ENCODE measurements at regions of chr5 and their contacts with region 1.

Region 1: DNA sequence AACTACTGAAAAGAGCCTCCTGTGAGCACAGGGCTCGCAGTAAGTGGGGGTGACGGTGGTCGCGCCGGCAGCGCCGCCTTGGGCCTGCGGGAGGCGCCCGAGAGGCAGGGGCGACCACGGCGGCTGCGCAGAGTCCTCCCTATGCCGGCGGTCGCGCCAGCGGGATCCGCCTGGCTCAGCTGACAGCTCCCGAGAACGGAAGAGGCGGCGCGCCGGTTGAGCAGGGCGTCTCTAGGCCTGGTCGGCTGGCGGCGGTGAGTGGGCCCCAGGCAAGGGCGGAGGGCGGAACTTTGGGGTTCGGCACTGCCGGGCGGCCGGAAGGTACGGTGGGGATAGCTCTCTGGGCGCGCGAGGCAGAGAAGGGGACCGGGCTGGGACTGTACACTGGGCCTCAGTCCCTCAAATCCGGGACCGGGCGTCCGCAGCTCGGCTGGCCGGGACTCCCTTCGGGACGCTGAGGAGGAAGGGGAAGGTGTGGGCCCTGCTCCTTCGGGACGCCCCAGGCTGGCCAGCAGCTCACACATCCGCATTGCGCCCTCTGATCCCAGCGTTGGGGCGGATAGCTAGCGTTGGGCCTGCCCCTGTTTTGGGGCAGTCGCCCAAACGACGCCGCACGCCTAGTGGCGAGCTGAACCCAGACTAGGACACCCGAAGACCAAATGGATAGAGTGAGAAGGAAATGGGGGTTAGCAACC is at the start of gene RNF14:
- DNase-seq: peak; percentile 90
- H3K4me3 ChIP-seq: peak within 1 kb of the TSS; percentile 67 to 83
- H3K27ac ChIP-seq: peak within 1 kb of the TSS; percentile 96
- H3K4me1 ChIP-seq: no peaks in the 10 kb centered on the region
- H3K27me3 ChIP-seq: no peaks in the 10 kb centered on the region
- CTCF ChIP-seq: peak; percentile 81 to 98 (median 94)
- POLR2A ChIP-seq: peak; percentile 87
- total RNA-seq, gene RNF14: 40.8 to 66.9 TPM

Region 2: DNA sequence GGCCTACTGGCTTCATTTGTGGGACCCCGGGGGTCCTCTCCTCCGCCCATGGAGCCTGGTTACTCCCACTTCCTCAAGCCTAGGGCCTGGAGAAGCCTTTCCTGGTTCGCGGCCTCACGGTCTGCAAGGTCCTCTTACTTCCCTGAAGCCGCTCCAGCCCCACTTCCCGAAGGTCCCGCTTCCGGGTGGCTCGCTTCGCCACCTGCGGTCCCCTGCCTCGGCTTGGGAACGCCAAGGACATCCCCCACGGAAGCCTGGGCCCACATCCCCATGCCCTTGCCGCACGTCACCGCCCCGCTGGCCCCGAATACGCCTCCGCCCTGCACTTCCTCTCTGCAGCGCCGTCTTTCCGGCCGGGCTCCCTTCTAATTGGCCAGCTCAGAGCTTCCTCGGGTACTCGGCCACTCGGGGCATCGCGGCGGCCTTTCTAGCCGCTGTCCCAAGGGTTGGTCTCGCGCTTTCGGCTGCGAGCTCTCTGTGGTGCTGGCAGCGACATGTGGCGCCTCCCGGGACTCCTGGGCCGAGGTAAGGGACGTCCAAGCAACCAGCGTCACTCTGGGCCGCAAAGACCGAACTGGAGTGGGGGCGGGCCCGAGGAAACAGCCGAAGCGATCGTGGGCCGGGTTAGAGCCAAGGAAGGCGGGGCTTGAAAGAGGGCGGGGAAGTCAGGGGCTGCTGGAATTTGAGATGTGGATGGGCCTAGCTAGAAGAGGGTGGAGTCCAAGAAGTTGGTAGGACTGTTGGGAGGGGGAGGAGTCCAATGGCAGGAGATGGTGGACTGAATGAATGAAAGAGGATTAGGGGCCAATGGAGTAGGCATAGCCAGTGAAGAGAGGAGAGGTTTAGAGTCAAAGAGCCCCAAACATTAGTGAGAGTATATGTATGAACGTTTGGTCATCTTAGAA is 45.4 kb before region 1 on chr5 and contains the start of gene DELE1:
- intact Hi-C with region 1: loop called (anchors 2 kb)
- DNase-seq: peak; percentile 90
- H3K4me3 ChIP-seq: peak within 1 kb of the TSS; percentile 59 to 62
- H3K27ac ChIP-seq: peak within 1 kb of the TSS; percentile 94 to 99
- H3K4me1 ChIP-seq: no peaks in the 10 kb centered on the region
- H3K27me3 ChIP-seq: no peaks in the 10 kb centered on the region
- CTCF ChIP-seq: peak in 2 of 4 experiments; percentile 13 to 22
- POLR2A ChIP-seq: peak; percentile 68
- total RNA-seq, gene DELE1: 66.7 to 98.1 TPM

Region 3: DNA sequence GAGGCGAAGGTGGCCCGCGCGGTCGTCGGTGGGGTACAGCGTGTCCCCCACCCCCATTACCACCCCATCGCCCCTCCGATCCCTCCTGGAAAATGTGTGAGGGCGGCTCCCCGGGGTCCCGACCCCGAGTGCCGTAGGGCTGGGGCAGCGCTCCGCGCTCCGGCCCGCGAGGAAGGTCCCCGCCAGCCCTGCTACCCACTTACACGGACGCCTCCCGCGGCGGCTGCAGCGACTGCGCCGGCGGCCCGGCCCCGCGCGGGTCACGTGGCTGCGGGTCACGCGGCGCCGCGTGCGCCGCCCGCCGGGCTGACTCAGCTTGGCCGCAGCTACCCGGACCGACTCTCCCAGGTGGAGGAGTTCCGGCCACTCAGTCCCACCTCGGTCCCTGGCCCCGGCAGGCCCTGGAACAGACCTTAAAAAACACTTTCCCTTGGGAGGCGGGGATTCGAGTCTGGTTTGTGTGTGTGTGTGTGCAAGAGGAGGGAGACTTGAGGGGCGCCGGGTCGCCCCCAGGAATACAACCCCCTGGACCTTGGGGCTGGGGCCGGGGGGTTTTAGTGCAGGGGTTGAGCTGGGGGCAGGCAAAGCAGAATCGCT is 43.8 kb after region 1 on chr5 and contains the start of gene GNPDA1:
- intact Hi-C with region 1: loop called (anchors 10 kb)
- DNase-seq: peak; percentile 78
- H3K4me3 ChIP-seq: peak within 1 kb of the TSS; percentile 73 to 81
- H3K27ac ChIP-seq: peak within 1 kb of the TSS; percentile 87
- H3K4me1 ChIP-seq: peaks cover 8% of the 10 kb centered on the region
- H3K27me3 ChIP-seq: no peaks in the 10 kb centered on the region
- CTCF ChIP-seq: peak in 2 of 4 experiments; percentile 16 to 53
- POLR2A ChIP-seq: peak; percentile 57
- total RNA-seq, gene GNPDA1: 30.0 to 58.5 TPM